AG04450 (cell line): ENCODE measurements at regions of chr15 and their contacts with region 1.

Region 1: GRCh38 chr15:43824302-43825246 is at the start of gene MFAP1:
- DNase-seq: peak; percentile 98
- H3K4me3 ChIP-seq: peak within 1 kb of the TSS; percentile 84
- H3K27ac ChIP-seq: peak within 1 kb of the TSS; percentile 100
- H3K27me3 ChIP-seq: no peaks in the 10 kb centered on the region
- CTCF ChIP-seq: no peak
- polyA plus RNA-seq, gene MFAP1: 46.5 and 61.9 TPM in 2 replicates

Region 2: DNA sequence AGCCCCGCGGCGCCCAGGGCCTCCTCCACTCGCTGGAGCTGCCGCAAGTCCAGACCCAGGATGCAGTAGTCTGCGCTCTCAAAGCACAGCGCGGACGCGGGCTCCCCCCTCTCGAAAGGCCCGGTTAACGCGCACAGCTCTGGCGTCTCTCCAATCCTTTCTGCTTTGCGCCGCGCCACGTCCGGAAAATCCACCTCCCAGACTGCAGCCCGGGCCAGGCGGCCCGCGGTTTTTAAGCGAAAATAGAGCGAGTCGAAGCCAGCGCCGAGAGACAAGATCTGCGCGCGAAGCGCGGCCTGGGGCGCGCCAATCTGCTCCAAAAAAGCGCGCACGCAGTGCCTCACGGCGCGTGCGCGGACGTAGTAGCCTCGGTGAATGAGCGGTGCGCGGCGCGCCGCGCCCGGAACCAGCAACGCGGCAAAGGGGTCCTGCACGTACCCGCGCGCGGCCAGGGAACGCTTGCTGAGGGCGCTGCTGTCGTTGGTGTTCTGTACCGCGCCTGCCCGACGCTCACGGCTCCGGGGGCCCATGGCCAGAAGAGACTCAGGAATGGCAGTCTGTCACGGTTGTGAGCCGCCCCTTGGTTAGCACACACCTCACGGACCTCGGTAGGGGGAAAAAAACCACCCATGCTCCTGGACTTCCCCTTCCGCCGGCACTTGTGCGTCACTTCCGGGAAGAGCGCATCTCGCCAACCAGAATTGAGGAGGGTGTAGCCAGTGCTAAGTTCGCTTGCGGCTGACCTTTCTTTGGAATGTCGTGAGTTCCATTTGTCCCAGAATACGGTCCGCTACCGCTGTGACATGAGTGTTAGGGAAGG is 494.4 kb before region 1 on chr15 and contains the start of gene LCMT2:
- CTCF ChIA-PET with region 1: no interaction called
- POLR2A ChIA-PET with region 1: no interaction called
- DNase-seq: peak; percentile 77
- H3K4me3 ChIP-seq: peak within 1 kb of the TSS; percentile 90
- H3K27ac ChIP-seq: peak within 1 kb of the TSS; percentile 96
- H3K27me3 ChIP-seq: no peaks in the 10 kb centered on the region
- CTCF ChIP-seq: no peak
- polyA plus RNA-seq, gene LCMT2: 11.2 and 11.7 TPM in 2 replicates

Region 3: GRCh38 chr15:43791993-43792760 is 32.4 kb before region 1 on chr15 and contains the start of gene SERF2:
- CTCF ChIA-PET with region 1: interaction called, 6 read pairs
- POLR2A ChIA-PET with region 1: interaction called, 11 read pairs
- DNase-seq: peak; percentile 99
- H3K4me3 ChIP-seq: peak within 1 kb of the TSS; percentile 100
- H3K27ac ChIP-seq: peak within 1 kb of the TSS; percentile 93
- H3K27me3 ChIP-seq: no peaks in the 10 kb centered on the region
- CTCF ChIP-seq: no peak
- polyA plus RNA-seq, gene SERF2: 608 and 874 TPM in 2 replicates

Region 4: GRCh38 chr15:43800286-43801141 is 24.1 kb before region 1 on chr15 and contains the start of gene HYPK:
- CTCF ChIA-PET with region 1: interaction called, 6 read pairs
- POLR2A ChIA-PET with region 1: interaction called, 18 read pairs
- DNase-seq: peak; percentile 64
- H3K4me3 ChIP-seq: peak within 1 kb of the TSS; percentile 97
- H3K27ac ChIP-seq: peak within 1 kb of the TSS; percentile 57
- H3K27me3 ChIP-seq: no peaks in the 10 kb centered on the region
- CTCF ChIP-seq: no peak
- polyA plus RNA-seq, gene HYPK: 6.4 and 10.7 TPM in 2 replicates